WTC11 (cell line): ENCODE measurements at regions of chr1 and their contacts with region 1.

Region 1: DNA sequence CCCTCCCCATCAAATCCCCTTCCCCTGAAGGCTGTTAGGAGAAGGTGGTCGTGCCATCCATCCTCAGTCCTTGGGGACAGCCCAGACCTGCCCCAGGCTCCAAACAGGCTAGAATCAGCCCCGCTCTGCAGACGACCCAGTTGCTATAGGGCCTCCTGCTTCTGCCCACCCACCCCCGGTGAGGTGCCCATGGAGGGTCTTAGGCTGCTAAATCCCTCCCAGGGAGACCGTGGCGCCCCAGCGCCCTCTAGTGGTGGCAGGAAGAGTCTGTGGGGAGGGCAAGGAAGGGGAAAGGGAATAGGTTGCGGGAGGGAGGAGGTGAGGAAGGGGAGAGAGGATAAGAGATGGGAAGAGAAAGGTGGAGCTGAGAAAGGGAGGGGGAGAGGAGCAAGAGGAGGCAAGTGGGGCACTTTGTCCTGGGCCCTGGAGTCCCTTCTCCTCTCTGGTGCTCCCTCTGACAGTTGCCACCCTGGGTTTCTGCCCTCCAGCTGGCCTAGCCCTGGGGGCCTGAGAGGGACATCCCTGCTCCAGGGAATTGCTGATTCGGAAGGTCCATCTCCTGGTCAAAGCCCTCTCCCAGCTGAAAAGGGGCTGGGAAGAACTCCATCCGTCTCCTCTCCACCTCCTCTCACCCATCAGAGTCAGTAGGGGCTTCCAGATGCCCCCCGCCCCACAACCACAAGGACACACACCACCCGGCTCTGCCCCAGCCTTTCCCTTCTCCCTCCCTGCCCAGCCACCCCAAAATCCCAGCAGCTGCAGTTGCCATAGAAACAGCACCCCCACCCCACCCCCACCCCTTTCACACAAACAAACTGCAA is 55.4 kb downstream of the CAMK2N1 start:
- DNase-seq: peak; percentile 85
- ATAC-seq: peak; percentile 97
- H3K4me3 Mint-ChIP-seq: no peak overlapping the region
- H3K27ac Mint-ChIP-seq: no peak overlapping the region
- H3K4me1 Mint-ChIP-seq: peaks cover 12% of the 10 kb centered on the region
- H3K27me3 Mint-ChIP-seq: peaks cover 42% of the 10 kb centered on the region
- CTCF ChIP-seq: peak; percentile 97

Region 2: GRCh38 chr1:20361806-20362640 is 68.5 kb before region 1 on chr1:
- CTCF ChIA-PET with region 1: interaction called, 71 read pairs
- POLR2A ChIA-PET with region 1: no interaction called
- DNase-seq: peak; percentile 95
- ATAC-seq: peak; percentile 77
- H3K4me3 Mint-ChIP-seq: no peak overlapping the region
- H3K27ac Mint-ChIP-seq: no peak overlapping the region
- H3K4me1 Mint-ChIP-seq: peaks cover 9% of the 10 kb centered on the region
- H3K27me3 Mint-ChIP-seq: peaks cover 50% of the 10 kb centered on the region
- CTCF ChIP-seq: peak; percentile 99

Region 3: GRCh38 chr1:20440785-20441200 is 10.2 kb after region 1 on chr1:
- CTCF ChIA-PET with region 1: interaction called, 18 read pairs
- POLR2A ChIA-PET with region 1: interaction called, 3 read pairs
- DNase-seq: peak; percentile 73
- ATAC-seq: peak; percentile 87
- H3K4me3 Mint-ChIP-seq: peak overlapping the region; percentile 40
- H3K27ac Mint-ChIP-seq: no peak overlapping the region
- H3K4me1 Mint-ChIP-seq: peaks cover 3% of the 10 kb centered on the region
- H3K27me3 Mint-ChIP-seq: peaks cover 21% of the 10 kb centered on the region
- CTCF ChIP-seq: no peak

Region 4: GRCh38 chr1:20472860-20473711 is 42.5 kb after region 1 on chr1:
- CTCF ChIA-PET with region 1: interaction called, 15 read pairs
- POLR2A ChIA-PET with region 1: no interaction called
- DNase-seq: peak; percentile 87
- ATAC-seq: peak; percentile 87
- H3K4me3 Mint-ChIP-seq: peak overlapping the region; percentile 54
- H3K27ac Mint-ChIP-seq: peak overlapping the region; percentile 60
- H3K4me1 Mint-ChIP-seq: peaks cover 42% of the 10 kb centered on the region
- H3K27me3 Mint-ChIP-seq: peaks cover 21% of the 10 kb centered on the region
- CTCF ChIP-seq: no peak

Region 5: DNA sequence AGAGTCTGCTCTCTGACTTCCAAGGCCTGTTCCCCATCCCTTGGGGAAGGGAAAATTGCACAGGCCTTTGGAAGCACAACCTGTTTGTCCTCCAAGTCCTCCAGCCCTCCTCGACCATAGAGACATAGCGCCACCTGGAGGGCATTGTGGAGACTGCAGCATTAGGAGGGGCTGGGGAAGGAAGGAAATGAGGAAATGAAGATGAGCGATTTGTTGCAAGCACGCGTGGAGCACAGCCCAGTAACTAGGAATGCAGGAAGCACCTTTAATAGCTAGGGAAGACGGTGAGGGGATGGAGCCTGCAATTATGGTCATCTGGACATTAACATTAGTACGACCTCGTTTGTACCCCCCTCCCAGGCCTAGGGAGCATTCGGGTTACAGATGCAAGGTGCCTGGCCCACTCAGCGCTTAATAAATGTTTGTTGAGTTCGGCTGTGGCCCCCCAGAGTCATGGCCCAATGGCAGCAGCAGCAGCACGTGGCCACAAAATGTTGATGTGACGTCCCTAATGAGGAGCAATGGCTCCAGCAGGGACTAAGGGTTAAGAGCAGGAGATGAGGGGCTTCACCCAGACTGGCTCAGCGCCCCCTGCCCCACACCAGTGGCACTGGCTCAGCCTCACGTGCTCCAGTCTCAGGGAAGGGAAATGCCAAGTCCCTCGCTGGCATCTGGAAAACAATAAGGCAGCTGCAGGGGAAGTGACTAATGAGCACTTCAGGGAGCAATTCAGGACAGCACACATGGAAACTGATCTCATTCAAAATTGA is 63.5 kb after region 1 on chr1:
- CTCF ChIA-PET with region 1: interaction called, 19 read pairs
- POLR2A ChIA-PET with region 1: no interaction called
- DNase-seq: peak; percentile 93
- ATAC-seq: peak; percentile 82
- H3K4me3 Mint-ChIP-seq: no peak overlapping the region
- H3K27ac Mint-ChIP-seq: no peak overlapping the region
- H3K4me1 Mint-ChIP-seq: peaks cover 4% of the 10 kb centered on the region
- H3K27me3 Mint-ChIP-seq: peaks cover 22% of the 10 kb centered on the region
- CTCF ChIP-seq: peak; percentile 91